Naive thymus-derived CD8-positive, alpha-beta T cell (primary cell): ENCODE measurements at regions of chr9 and their contacts with region 1.

Region 1: DNA sequence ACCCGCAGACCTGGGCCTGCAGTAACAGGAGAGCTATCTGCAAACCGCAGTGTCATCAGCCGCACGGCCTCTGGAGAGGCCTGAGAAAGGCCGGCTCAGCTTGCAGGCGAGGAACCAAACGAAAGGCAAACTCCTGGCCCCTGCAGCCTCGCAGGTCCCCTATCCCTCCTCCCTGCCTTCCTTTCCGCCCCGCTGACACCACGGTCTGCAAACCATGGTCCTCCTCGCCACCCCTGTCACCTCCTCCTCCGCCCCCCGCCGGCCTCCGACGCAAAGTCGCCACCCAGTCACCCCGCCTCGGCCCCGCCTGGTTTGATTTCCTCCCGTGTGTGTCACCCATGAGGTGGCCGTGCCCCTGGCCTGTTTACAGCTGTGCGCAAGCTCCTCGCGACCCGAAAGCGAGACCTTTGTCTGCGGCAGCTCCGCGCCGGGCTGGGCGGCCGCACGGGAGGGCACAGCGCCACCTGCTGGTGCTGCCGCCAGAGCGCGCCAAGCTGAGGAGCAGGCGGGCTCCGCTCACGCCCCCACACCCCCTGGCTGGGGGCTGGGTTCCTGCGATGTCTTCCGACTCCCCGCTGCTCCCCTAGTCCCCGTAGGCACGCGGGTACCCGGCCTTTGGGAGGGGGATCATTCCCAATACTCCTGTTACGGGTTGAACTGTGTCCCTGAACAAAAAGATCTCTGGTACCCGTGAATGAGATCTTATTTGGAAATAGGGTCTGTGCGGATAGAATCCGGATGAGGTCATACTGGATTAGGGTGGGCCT is 19.4 kb downstream of the GBGT1 start:
- DNase-seq: peak; percentile 75 to 98 (median 89)
- ATAC-seq: peak; percentile 57 to 59
- H3K4me3 Mint-ChIP-seq: peak overlapping the region; percentile 73 to 90 (median 84)
- H3K27ac Mint-ChIP-seq: peak overlapping the region; percentile 88 to 99 (median 96)
- H3K4me1 Mint-ChIP-seq: peaks cover 37 to 76% (median 72%) of the 10 kb centered on the region in 4 donors
- H3K27me3 Mint-ChIP-seq: no peaks in the 10 kb centered on the region

Region 2: DNA sequence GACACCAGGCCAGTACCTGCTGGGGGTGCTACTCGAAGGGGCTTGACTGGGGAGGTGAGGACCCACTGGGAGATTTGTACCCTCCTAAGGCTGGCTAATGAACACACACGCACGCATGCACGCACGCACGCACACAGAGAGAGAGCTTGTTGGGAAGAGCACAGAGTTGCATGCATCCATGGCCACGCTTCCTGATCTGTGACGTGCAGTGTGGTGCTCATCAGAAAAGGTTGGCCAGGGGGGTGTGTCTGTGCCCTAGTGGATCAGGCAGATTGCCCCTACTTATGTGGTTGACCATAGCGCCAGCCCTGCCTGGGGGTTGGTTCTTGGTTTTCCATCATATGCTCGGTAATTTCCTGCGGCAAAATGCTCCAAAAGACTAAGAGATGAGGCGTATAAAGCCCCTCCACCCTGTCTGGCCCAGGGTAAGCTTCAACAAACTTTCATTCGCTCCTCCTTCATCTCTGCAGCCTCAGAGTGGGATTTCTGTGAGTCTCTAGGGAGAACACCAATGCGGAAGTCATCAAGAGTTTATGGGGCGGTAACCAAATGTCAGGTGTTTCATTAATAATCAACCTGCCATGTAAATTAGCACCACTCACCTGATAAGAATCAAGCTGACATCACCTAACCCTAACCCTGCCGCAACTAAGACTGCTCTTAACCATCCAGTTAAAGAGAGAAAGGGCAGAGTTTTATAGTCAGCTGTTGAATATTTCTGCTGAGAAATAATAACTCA is 173.8 kb before region 1 on chr9:
- POLR2A ChIA-PET with region 1: no interaction called
- DNase-seq: no peak
- ATAC-seq: no peak
- H3K4me3 Mint-ChIP-seq: no peak overlapping the region
- H3K27ac Mint-ChIP-seq: no peak overlapping the region
- H3K4me1 Mint-ChIP-seq: peaks cover 0 to 6% (median 0%) of the 10 kb centered on the region in 4 donors
- H3K27me3 Mint-ChIP-seq: peaks cover 4 to 39% (median 15%) of the 10 kb centered on the region in 5 donors

Region 3: GRCh38 chr9:133030317-133031129 is 113.8 kb before region 1 on chr9 and contains the start of gene GTF3C5:
- POLR2A ChIA-PET with region 1: interaction called, 28 read pairs
- DNase-seq: peak; percentile 81 to 97 (median 92)
- ATAC-seq: peak; percentile 96
- H3K4me3 Mint-ChIP-seq: peak within 1 kb of the TSS; percentile 97 to 100 (median 99)
- H3K27ac Mint-ChIP-seq: peak within 1 kb of the TSS; percentile 97 to 99 (median 98)
- H3K4me1 Mint-ChIP-seq: peaks cover 22 to 75% (median 63%) of the 10 kb centered on the region in 4 donors
- H3K27me3 Mint-ChIP-seq: no peaks in the 10 kb centered on the region
- polyA plus RNA-seq, gene GTF3C5: 33.7 to 40.1 (median 37.8) TPM

Region 4: GRCh38 chr9:133103183-133103986 is 40.9 kb before region 1 on chr9:
- POLR2A ChIA-PET with region 1: interaction called, 28 read pairs
- DNase-seq: peak in 9 of 10 donors; percentile 28 to 75 (median 56)
- ATAC-seq: peak; percentile 54 to 73
- H3K4me3 Mint-ChIP-seq: no peak overlapping the region
- H3K27ac Mint-ChIP-seq: peak overlapping the region in 7 of 10 donors; percentile 75 to 91 (median 88)
- H3K4me1 Mint-ChIP-seq: peaks cover 0 to 5% (median 0%) of the 10 kb centered on the region in 4 donors
- H3K27me3 Mint-ChIP-seq: no peaks in the 10 kb centered on the region

Region 5: GRCh38 chr9:133115448-133116345 is 28.6 kb before region 1 on chr9:
- POLR2A ChIA-PET with region 1: interaction called, 40 read pairs
- DNase-seq: peak in 1 of 10 donors; percentile 52
- ATAC-seq: no peak
- H3K4me3 Mint-ChIP-seq: peak overlapping the region in 1 of 10 donors; percentile 18
- H3K27ac Mint-ChIP-seq: peak overlapping the region in 3 of 10 donors; percentile 24 to 67 (median 52)
- H3K4me1 Mint-ChIP-seq: peaks cover 22 to 71% (median 62%) of the 10 kb centered on the region in 4 donors
- H3K27me3 Mint-ChIP-seq: no peaks in the 10 kb centered on the region

Region 6: DNA sequence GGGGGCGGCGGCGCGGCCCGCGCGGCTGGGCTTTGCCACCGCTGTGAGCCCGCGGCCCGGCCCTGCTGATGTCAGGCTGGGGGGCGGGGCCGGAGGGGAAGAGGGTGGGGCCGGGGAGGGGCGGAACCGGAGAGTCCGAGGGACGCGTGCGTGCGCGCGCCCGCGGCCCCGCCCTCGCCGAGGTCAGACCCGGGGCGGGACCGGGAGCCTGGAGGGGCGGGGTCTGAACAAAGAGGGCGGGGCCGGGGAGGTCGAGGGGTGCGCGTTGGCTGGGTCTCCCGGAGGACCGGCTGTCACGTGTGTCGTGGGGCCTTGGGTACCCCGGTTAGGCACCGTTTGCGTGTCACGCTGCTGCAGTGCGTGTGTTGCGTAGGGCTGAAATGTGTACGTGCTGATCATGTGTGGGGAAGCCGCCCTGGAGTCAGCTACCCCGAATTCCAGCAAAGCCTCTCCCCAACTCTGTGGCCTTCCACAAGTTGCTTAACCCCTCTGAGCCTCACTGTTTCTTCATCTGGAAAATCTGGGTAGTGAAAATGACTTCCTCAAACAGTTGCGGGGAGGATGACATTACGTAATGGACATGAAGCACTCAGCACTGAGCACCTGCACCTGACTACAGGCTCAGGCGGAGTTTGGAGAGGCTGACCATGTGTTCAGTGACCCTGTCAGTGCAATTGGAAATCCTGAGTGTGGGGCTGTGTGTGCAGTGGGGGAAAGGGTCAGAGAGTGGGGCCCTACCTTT is 23.0 kb before region 1 on chr9 and contains the start of gene RALGDS:
- POLR2A ChIA-PET with region 1: interaction called, 40 read pairs
- DNase-seq: peak; percentile 83 to 97 (median 88)
- ATAC-seq: peak; percentile 72 to 76
- H3K4me3 Mint-ChIP-seq: peak within 1 kb of the TSS; percentile 75 to 89 (median 82)
- H3K27ac Mint-ChIP-seq: peak within 1 kb of the TSS; percentile 90 to 100 (median 98)
- H3K4me1 Mint-ChIP-seq: peaks cover 36 to 74% (median 63%) of the 10 kb centered on the region in 4 donors
- H3K27me3 Mint-ChIP-seq: no peaks in the 10 kb centered on the region
- polyA plus RNA-seq, gene RALGDS: 14.1 to 35.5 (median 29.4) TPM

Region 7: DNA sequence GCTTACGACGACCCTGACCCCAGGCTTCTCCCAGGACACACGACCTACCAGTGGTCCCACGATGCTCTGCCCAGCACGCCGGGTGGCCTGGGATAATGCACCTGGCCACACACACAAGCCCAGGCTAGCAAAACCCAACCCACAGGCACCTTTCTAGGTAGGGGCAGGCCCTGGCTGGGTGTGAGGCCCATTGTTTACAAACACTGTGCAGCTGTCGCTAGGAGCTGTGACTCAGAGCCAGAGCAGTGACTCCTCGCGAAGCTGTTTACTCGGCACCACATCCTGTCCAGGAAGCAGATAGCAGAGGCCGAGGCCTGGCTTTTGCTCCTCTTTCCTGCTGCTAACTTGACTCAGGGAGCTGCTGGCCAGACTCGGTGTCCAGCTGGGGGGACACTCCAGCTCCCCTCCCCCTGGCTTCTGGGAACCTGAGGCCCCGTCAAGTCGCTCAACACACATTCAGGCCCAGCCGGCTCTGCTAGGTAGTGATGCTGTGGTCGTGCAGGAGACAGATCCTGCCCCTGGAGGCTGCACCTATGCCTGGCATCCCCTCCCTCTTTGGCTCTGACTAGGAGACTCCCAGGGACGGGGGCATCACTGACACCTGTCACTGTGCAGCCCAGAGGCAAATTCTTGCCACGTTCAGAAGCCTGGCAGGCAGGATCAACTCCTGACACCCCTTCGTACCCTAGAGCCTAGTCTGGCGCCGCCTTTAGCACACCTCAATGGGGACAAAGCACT is 10.5 kb before region 1 on chr9:
- POLR2A ChIA-PET with region 1: interaction called, 99 read pairs
- DNase-seq: peak; percentile 65 to 96 (median 89)
- ATAC-seq: peak; percentile 80 to 87
- H3K4me3 Mint-ChIP-seq: peak overlapping the region; percentile 61 to 92 (median 86)
- H3K27ac Mint-ChIP-seq: peak overlapping the region; percentile 100
- H3K4me1 Mint-ChIP-seq: peaks cover 35 to 72% (median 61%) of the 10 kb centered on the region in 4 donors
- H3K27me3 Mint-ChIP-seq: no peaks in the 10 kb centered on the region

Region 8: DNA sequence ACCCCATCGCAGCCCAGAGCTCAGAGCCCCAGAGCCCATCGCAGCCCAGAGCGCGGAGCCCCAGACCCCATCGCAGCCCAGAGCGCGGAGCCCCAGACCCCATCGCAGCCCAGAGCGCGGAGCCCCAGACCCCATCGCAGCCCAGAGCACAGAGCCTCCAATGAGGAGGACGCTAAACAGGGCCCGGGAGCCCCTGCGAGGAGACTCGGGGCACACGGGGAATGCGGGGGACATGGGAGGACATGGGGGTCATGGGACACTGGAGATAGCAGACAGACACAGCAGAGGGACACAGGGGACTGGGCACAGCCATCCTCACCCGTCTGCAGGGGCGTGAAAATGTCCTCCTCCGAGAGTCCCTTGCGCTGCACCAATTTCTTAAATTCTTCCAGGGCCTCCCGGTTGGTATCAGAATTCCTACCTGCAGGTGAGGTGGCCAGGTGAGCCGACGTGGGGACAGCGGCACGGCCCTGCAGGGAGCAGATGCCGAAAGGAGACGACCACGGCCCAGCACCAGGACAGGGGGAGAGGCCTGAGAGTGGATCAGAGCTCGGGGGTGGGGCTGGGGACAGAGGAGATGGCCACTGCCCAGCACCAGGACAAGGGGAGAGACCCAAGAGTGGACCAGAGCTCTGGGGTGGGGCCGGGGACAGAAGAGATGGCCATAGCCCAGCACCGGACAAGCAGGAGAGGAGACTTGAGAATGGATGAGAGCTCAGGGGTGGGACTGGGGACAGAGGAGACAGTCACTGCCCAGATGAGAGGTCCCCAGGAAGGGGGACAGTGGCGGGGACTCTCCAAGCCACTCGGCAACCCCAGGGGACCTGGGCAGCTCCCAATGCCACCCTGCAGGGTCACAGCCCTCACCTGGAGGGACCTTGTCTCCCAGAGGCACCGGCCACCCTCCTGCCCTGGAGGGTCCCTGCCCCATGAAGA is 61.9 kb after region 1 on chr9:
- POLR2A ChIA-PET with region 1: no interaction called
- DNase-seq: no peak
- ATAC-seq: no peak
- H3K4me3 Mint-ChIP-seq: no peak overlapping the region
- H3K27ac Mint-ChIP-seq: no peak overlapping the region
- H3K4me1 Mint-ChIP-seq: no peaks in the 10 kb centered on the region
- H3K27me3 Mint-ChIP-seq: peaks cover 8 to 39% (median 33%) of the 10 kb centered on the region in 5 donors